OCI-LY7 (cell line): ENCODE measurements at regions of chr4 and their contacts with region 1.

Region 1: DNA sequence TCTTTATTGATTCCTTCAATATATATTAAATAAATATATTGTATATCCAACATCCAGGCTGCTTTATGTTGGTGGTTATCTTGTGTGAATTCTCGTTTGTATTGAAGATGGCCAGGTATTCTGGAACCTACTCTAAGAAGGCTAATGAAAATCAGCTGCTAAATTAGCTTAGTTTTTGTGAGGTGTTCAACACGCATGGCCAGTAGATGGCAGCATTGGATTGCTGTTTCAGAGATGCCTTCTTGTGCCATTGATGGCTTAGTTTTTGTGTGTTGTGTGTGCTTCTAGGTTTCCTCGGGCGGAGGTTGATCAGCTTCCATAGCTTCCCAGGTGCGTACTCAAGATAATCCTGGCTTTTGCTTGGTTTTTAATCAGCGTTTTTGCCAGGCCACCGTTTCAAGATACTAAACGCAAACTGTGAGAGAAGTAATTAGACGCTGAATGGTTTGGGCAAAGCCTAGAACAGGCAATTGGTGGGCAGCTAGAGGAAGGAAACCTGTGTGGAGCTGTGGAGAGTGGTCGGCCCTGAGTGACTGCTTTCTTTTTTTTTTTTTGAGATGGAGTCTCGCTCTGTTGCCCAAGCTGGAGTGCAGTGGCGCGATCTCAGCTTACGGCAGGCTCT is 15.1 kb downstream of the NOCT start:
- DNase-seq: peak; percentile 86
- H3K4me3 ChIP-seq: no peak overlapping the region
- H3K27ac ChIP-seq: no peak overlapping the region
- H3K4me1 ChIP-seq: peaks cover 11% of the 10 kb centered on the region
- CTCF ChIP-seq: peak; percentile 97

Region 2: DNA sequence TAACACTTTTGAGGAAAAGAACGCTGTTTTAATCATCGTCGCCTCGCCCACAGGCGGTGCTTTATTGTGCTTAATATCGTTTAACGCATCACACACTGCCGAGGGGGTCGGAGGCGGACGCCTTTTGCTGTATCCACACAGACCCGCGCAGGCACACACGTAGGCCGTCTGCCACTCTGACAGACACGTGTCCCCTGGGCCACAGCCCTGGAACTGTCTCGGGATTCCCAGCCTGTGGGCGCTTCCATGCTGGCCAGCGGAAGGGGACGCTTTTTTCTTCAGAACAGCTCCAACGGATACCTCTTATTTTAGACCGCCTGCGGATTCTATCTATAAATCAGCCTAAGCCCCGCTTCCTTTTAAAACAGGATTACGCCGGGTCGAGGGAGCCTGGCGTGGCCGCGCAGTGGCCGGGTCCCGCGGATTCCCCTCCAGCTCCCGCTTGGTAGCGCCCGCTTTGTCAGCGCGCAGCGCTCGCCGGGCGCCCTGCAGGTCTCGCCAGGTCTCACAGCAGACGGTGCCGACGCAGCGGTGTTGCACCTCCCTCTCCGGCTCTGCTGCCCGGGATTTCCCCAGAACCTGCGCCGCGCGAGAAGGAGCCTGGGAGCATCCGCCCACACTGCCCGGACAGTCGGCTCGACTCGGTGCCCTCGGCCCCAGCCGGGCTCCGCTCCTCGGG is 15.3 kb before region 1 on chr4 and contains the start of gene NOCT:
- CTCF ChIA-PET with region 1: interaction called, 5 read pairs
- POLR2A ChIA-PET with region 1: interaction called, 24 read pairs
- intact Hi-C with region 1: no loop called
- DNase-seq: peak; percentile 95
- H3K4me3 ChIP-seq: peak within 1 kb of the TSS; percentile 88
- H3K27ac ChIP-seq: peak within 1 kb of the TSS; percentile 79
- H3K4me1 ChIP-seq: peaks cover 38% of the 10 kb centered on the region
- CTCF ChIP-seq: no peak
- total RNA-seq, gene NOCT: 12.7 and 22.8 TPM in 2 replicates

Region 3: GRCh38 chr4:139083956-139084803 is 53.5 kb after region 1 on chr4:
- CTCF ChIA-PET with region 1: interaction called, 4 read pairs
- POLR2A ChIA-PET with region 1: interaction called, 15 read pairs
- intact Hi-C with region 1: loop called (anchors 5 kb)
- DNase-seq: peak; percentile 93
- H3K4me3 ChIP-seq: peak overlapping the region; percentile 91
- H3K27ac ChIP-seq: peak overlapping the region; percentile 95
- H3K4me1 ChIP-seq: peaks cover 22% of the 10 kb centered on the region
- CTCF ChIP-seq: peak; percentile 46

Region 4: GRCh38 chr4:139177868-139178611 is 147.3 kb after region 1 on chr4:
- CTCF ChIA-PET with region 1: no interaction called
- POLR2A ChIA-PET with region 1: interaction called, 3 read pairs
- intact Hi-C with region 1: loop called (anchors 5 kb)
- DNase-seq: peak; percentile 95
- H3K4me3 ChIP-seq: peak overlapping the region; percentile 83
- H3K27ac ChIP-seq: peak overlapping the region; percentile 89
- H3K4me1 ChIP-seq: peaks cover 25% of the 10 kb centered on the region
- CTCF ChIP-seq: no peak

Region 5: DNA sequence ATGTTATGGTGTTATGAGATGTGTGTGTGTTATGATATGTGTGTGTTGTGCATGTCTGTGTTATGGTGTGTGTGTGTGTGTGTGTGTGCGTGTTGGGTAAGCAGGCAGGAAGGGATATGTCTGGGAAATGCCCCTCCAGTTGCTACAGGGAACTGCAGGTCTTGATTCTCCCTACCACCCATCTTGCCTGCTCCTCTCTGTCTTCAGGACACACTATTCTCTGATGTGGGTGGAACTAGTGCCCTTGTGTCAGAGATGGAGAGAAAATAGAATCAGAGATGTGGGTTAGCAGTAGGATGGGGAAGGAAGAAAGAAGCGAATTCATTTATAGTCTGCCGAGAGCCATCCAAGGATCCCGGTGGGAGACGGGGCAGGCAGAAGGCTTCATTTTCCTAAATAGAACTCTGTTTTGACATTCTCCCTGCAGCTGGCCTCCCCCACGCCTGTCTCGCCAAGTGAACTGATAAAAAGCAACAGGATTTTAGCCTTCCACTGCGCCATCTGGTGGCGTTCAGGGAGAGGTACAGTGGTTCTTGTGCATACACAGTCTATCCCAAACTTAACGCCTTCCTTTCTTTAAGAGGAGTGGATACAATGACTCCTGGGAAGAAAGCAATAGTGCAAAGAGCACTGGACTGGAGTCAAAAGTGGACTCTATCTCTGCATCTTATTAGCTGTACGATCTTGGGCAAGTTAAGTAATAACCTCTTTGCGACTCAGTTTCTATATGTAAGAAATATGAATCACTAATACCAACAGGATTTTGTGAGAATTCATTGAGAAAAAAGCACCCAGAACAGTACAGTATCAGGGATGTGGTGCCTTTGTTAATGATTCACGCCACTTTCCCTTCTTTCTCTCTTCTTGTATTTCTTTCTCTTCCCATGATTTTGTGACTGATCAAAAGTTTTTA is 620.8 kb after region 1 on chr4:
- CTCF ChIA-PET with region 1: no interaction called
- POLR2A ChIA-PET with region 1: no interaction called
- intact Hi-C with region 1: loop called (anchors 10 kb)
- DNase-seq: peak; percentile 74
- H3K4me3 ChIP-seq: no peak overlapping the region
- H3K27ac ChIP-seq: no peak overlapping the region
- H3K4me1 ChIP-seq: peaks cover 5% of the 10 kb centered on the region
- CTCF ChIP-seq: peak; percentile 96